Left ventricle myocardium superior (tissue), 1 donor: ENCODE measurements at regions of chr20 and their contacts with region 1.

Region 1: GRCh38 chr20:49982346-49983122 is at the start of gene SNAI1:
- DNase-seq: peak; percentile 87
- ATAC-seq: peak; percentile 90
- total RNA-seq, gene SNAI1: 0.82 TPM

Region 2: GRCh38 chr20:50067866-50068612 is 85.5 kb after region 1 on chr20:
- intact Hi-C with region 1: loop called (anchors 2 kb)
- DNase-seq: no peak
- ATAC-seq: no peak

Region 3: GRCh38 chr20:50083034-50083433 is 100.5 kb after region 1 on chr20:
- intact Hi-C with region 1: loop called (anchors 5 kb)
- DNase-seq: no peak
- ATAC-seq: peak; percentile 19

Region 4: GRCh38 chr20:50200482-50201104 is 218.1 kb after region 1 on chr20:
- intact Hi-C with region 1: no loop called
- DNase-seq: peak; percentile 69
- ATAC-seq: peak; percentile 81